ENCODE measurements at regions of chr15 and their contacts with region 1.

Region 1: GRCh38 chr15:71448688-71449114 is 333.4 kb downstream of the THSD4 start:
- DNase-seq: no peak
- ATAC-seq: no peak
- H3K4me3 Mint-ChIP-seq: no peak overlapping the region
- H3K27ac Mint-ChIP-seq: no peak overlapping the region
- H3K4me1 Mint-ChIP-seq: no peaks in the 10 kb centered on the region
- H3K27me3 Mint-ChIP-seq: no peaks in the 10 kb centered on the region

Region 2: DNA sequence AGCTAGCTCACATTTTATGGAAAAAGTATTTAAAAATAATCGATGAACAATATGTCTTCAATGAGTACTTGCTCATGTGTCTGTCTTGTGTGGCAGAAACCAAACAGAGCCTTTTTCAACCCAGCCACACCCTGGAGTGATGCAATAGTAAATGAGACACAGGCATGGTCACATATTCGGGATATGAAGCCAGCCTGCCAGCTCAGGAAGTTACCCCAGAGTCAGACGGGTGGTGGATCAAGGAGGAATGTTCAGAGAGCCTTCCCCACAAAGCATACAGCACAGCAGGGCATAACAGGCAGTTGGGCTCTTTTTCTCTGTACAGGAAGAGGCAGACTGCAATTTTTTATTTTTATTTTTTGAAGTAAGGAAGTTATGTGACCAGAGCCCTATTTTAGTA is 622.1 kb before region 1 on chr15:
- CTCF ChIA-PET with region 1: interaction called, 3 read pairs
- POLR2A ChIA-PET with region 1: no interaction called
- intact Hi-C with region 1: loop called in 1 of 2 experiments (anchors 10 kb)
- DNase-seq: no peak
- ATAC-seq: no peak
- H3K4me3 Mint-ChIP-seq: no peak overlapping the region
- H3K27ac Mint-ChIP-seq: no peak overlapping the region
- H3K4me1 Mint-ChIP-seq: no peaks in the 10 kb centered on the region
- H3K27me3 Mint-ChIP-seq: peaks cover 10% of the 10 kb centered on the region

Region 3: DNA sequence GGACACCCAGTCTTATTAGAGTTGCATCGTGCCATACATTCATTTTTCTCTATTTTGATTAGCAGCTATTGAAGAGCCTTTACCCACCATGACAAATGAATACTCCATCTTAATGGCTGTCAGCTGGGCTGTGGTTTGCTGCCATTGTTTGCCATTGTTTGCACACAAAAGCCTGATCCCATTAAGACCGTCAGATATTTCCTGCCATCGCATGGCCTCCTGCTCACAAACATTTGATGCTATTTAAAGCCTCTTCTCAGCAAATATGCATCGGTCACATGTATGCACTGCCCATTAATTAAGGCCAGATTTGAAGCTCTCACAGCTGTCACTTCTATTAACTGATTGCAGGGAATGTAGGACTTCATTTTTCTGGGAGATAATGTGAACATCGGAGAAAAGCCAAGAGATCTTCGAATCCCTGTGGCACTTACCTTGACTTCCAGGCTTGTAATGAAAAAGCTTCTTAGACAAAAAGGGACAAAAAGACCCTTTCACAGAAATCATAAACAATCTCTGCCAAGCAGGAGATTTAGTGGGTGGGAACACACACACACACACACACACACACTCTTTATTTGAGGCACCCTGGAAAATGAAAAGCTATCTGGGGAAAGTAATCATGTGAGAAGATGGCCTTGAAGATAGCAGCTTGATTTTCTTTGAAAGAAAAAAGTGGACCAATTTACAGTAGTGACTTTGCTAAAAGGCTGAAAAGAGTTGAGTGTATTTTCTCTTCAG is 186.3 kb after region 1 on chr15:
- CTCF ChIA-PET with region 1: no interaction called
- POLR2A ChIA-PET with region 1: no interaction called
- intact Hi-C with region 1: loop called in 1 of 2 experiments (anchors 5 kb)
- DNase-seq: no peak
- ATAC-seq: no peak
- H3K4me3 Mint-ChIP-seq: no peak overlapping the region
- H3K27ac Mint-ChIP-seq: no peak overlapping the region
- H3K4me1 Mint-ChIP-seq: no peaks in the 10 kb centered on the region
- H3K27me3 Mint-ChIP-seq: peaks cover 23% of the 10 kb centered on the region

Region 4: GRCh38 chr15:71651750-71652186 is 203.1 kb after region 1 on chr15:
- CTCF ChIA-PET with region 1: no interaction called
- POLR2A ChIA-PET with region 1: no interaction called
- intact Hi-C with region 1: loop called (anchors 5 kb)
- DNase-seq: peak; percentile 33
- ATAC-seq: no peak
- H3K4me3 Mint-ChIP-seq: no peak overlapping the region
- H3K27ac Mint-ChIP-seq: no peak overlapping the region
- H3K4me1 Mint-ChIP-seq: no peaks in the 10 kb centered on the region
- H3K27me3 Mint-ChIP-seq: peaks cover 4% of the 10 kb centered on the region

Region 5: DNA sequence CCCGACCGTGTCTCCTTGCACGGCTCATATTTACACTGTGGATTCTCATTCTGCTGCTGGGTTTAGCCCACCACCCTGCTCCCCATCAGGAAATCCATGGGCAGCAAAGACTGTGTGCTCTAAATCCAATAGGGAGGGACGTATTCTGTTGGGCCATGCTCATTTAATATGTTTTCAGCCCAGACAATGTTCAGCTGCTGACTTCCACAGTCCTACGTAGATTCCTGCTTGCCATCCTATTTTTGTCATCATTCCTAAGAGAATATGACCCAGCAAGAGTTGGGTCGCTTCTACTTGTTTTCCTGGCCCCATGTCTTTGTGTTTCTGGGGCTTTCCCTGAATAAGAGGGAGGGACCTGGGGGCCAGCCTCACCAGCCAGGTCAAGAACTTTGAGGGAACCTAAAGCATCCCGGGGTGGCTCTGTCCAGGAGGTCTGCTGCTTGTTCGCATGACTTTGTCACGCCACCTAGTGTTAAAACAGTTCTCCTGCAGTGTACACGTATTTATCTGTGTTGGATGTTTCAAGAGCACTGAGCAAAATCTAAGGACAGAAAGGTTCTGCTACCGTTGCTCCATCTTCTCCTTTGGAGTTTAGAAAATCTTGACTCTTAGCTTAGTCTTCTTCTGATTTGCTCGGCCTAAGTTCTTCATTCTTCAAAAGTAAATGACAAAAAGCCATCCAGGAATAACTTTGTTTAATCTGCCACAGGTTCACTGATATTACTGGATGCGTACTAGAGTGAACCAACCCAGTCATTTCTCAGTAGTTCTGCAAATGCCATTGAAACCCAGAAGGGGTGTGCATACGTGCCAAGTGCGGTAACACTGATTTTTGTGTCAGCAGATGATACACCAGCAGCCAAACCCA is 281.8 kb after region 1 on chr15:
- CTCF ChIA-PET with region 1: interaction called, 3 read pairs
- POLR2A ChIA-PET with region 1: no interaction called
- intact Hi-C with region 1: loop called (anchors 1 to 2 kb)
- DNase-seq: peak; percentile 49
- ATAC-seq: peak; percentile 77
- H3K4me3 Mint-ChIP-seq: no peak overlapping the region
- H3K27ac Mint-ChIP-seq: no peak overlapping the region
- H3K4me1 Mint-ChIP-seq: no peaks in the 10 kb centered on the region
- H3K27me3 Mint-ChIP-seq: peaks cover 11% of the 10 kb centered on the region